Activated CD4-positive, alpha-beta memory T cell treated with anti-CD3 and anti-CD28 coated beads for 36 hours (primary cell): ENCODE measurements at regions of chr14 and their contacts with region 1.

Region 1: GRCh38 chr14:74612350-74613021 is 449 bp upstream of the LTBP2 start:
- DNase-seq: peak; percentile 85
- H3K4me3 Mint-ChIP-seq: peak overlapping the region; percentile 64
- H3K27ac Mint-ChIP-seq: no peak overlapping the region
- H3K4me1 Mint-ChIP-seq: peaks cover 34% of the 10 kb centered on the region
- H3K27me3 Mint-ChIP-seq: peaks cover 14% of the 10 kb centered on the region

Region 2: DNA sequence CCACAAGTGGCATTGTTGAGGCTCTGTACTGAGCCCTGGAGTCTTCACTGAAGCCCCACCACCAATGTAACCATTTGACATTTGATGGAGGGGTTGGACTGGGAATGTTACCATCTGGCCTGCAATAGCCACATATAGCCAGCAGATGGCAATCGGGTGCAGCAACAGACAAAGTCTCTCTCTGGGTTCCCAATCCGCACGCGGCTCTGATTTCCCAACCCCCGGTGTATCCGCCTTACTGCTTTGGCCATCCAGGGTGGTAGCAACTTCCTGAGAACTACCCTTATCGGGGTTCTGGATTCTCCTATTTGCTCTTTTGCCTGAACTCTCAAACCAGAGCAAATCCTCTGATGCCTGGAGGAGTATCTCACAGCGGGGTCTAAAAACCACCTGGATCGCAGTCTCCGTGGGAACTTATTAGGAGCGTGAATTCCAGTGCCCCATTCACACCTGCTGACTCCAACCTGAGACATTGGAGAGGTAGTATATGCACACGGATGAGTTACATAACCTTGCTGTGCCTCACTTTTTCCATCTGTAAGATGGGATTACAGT is 250.0 kb before region 1 on chr14:
- CTCF ChIA-PET with region 1: interaction called, 5 read pairs
- POLR2A ChIA-PET with region 1: no interaction called
- intact Hi-C with region 1: loop called (anchors 2 kb)
- DNase-seq: peak; percentile 77
- H3K4me3 Mint-ChIP-seq: no peak overlapping the region
- H3K27ac Mint-ChIP-seq: peak overlapping the region; percentile 43
- H3K4me1 Mint-ChIP-seq: no peaks in the 10 kb centered on the region
- H3K27me3 Mint-ChIP-seq: peaks cover 8% of the 10 kb centered on the region

Region 3: GRCh38 chr14:74599321-74599761 is 13.1 kb before region 1 on chr14:
- CTCF ChIA-PET with region 1: interaction called, 10 read pairs
- POLR2A ChIA-PET with region 1: no interaction called
- intact Hi-C with region 1: no loop called
- DNase-seq: no peak
- H3K4me3 Mint-ChIP-seq: no peak overlapping the region
- H3K27ac Mint-ChIP-seq: no peak overlapping the region
- H3K4me1 Mint-ChIP-seq: no peaks in the 10 kb centered on the region
- H3K27me3 Mint-ChIP-seq: no peaks in the 10 kb centered on the region

Region 4: DNA sequence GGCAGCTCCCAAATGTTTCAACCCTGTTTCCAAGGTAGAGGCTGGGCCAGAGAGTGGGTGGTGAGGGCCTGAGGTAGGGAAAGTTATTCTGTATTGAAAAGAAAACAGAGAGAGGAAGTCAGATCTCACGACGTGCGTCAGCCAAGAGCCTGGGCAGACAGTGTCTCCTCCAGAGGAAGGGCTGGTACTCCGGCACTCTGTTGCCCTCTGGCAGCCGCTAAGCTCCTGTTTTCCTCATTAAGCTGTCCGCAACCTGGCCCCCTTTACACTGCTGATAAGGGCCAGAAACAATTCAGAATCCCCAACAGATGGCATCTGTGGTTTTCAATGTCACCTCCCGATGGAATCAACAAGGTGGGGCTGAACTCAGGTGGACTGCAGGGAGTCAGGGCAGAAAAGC is 25.6 kb after region 1 on chr14:
- CTCF ChIA-PET with region 1: interaction called, 10 read pairs
- POLR2A ChIA-PET with region 1: no interaction called
- intact Hi-C with region 1: no loop called
- DNase-seq: no peak
- H3K4me3 Mint-ChIP-seq: no peak overlapping the region
- H3K27ac Mint-ChIP-seq: no peak overlapping the region
- H3K4me1 Mint-ChIP-seq: no peaks in the 10 kb centered on the region
- H3K27me3 Mint-ChIP-seq: peaks cover 10% of the 10 kb centered on the region

Region 5: GRCh38 chr14:74712499-74713394 is 100.3 kb after region 1 on chr14 and contains the starts of genes AREL1 and FCF1:
- CTCF ChIA-PET with region 1: interaction called, 7 read pairs
- POLR2A ChIA-PET with region 1: no interaction called
- intact Hi-C with region 1: loop called (anchors 2 kb)
- DNase-seq: peak; percentile 90
- H3K4me3 Mint-ChIP-seq: peak within 1 kb of the TSS; percentile 99
- H3K27ac Mint-ChIP-seq: peak within 1 kb of the TSS; percentile 89
- H3K4me1 Mint-ChIP-seq: peaks cover 44% of the 10 kb centered on the region
- H3K27me3 Mint-ChIP-seq: no peaks in the 10 kb centered on the region
- total RNA-seq, gene AREL1: 31.9 to 34.6 TPM
- total RNA-seq, gene FCF1: 72.1 to 72.5 TPM

Region 6: DNA sequence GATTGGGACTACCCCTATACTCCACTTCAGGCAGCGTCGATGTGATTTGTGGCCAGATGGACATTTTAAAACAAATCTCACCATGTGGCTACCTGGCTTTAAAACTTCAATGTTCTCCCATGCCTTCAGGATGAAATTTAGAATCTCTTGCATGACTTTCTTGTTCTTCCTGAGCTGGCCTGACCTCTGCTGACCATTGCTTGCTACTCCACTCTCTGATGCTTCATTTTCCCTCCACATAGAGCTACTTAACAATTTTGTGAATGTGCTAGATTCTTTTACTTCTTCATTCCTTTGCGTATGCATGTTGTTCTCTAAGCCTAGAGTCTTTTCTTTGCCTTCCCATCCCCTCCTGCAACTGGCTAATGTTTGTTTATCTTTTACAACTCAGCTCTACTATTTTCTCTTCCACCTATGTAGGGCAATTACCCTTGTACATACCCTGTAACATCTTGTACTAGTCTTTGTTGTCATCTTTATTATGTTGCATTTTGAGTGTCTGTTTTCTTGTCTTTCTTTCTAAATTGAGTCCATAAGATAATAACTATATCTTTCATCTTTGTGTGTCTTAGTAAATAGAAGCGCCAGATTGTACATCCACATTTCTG is 191.8 kb after region 1 on chr14:
- CTCF ChIA-PET with region 1: interaction called, 27 read pairs
- POLR2A ChIA-PET with region 1: no interaction called
- intact Hi-C with region 1: loop called (anchors 1 kb)
- DNase-seq: peak; percentile 38
- H3K4me3 Mint-ChIP-seq: no peak overlapping the region
- H3K27ac Mint-ChIP-seq: no peak overlapping the region
- H3K4me1 Mint-ChIP-seq: peaks cover 2% of the 10 kb centered on the region
- H3K27me3 Mint-ChIP-seq: no peaks in the 10 kb centered on the region